Naive thymus-derived CD4-positive, alpha-beta T cell (primary cell): ENCODE measurements at regions of chr10 and their contacts with region 1.

Region 1: DNA sequence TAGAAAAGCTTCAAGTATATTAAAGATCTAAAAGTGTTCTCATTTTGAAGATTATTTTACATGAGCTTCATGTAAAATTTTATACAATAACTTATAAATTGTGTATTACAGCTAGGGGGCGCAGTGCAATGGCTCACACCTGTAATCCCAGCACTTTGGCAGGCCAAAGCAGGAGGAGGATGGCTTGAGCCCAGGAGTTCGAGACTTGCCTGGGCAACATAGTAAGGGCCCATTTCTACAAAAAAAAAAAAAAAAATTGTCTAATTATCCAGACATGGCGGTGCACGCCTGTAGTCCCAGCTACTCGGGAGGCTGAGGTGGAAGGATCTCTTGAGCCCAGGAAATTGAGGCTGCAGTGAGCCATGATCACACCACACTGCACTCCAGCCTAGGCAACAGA is 16.6 kb downstream of the ACBD5 start:
- DNase-seq: peak in 7 of 9 donors; percentile 20 to 60 (median 44)
- ATAC-seq: peak; percentile 71
- H3K4me3 ChIP-seq: no peak overlapping the region
- H3K4me3 Mint-ChIP-seq: no peak overlapping the region
- H3K27ac ChIP-seq: no peak overlapping the region
- H3K27ac Mint-ChIP-seq: peak overlapping the region in 1 of 9 donors; percentile 1
- H3K4me1 ChIP-seq: peaks cover 0 to 36% of the 10 kb centered on the region in 2 donors
- H3K4me1 Mint-ChIP-seq: peaks cover 8 to 20% (median 11%) of the 10 kb centered on the region in 7 donors
- H3K27me3 ChIP-seq: no peaks in the 10 kb centered on the region
- H3K27me3 Mint-ChIP-seq: no peaks in the 10 kb centered on the region

Region 2: DNA sequence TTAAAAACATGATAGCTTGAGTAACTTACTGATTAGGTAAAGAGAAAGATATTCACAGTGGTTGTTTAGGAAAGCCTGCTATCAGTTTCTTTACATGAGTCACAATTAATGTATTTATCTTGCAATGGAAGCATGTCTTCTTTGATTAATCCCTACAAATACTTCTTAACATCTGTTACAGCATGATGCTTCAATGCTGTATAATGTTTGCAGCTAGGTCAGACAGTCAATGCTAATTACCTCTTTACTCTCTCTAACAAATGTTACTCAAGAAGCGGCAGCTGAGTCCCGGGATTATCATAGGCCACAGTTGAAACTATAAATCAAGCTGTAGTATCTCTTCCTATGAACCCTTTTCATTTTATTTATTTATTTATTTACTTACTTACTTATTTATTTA is 16.6 kb before region 1 on chr10:
- CTCF ChIA-PET with region 1: interaction called, 3 read pairs
- POLR2A ChIA-PET with region 1: no interaction called
- intact Hi-C with region 1: loop called in 1 of 2 experiments (anchors 2 kb)
- DNase-seq: no peak
- ATAC-seq: no peak
- H3K4me3 ChIP-seq: no peak overlapping the region
- H3K4me3 Mint-ChIP-seq: no peak overlapping the region
- H3K27ac ChIP-seq: no peak overlapping the region
- H3K27ac Mint-ChIP-seq: no peak overlapping the region
- H3K4me1 ChIP-seq: no peaks in the 10 kb centered on the region
- H3K4me1 Mint-ChIP-seq: peaks cover 0 to 3% (median 0%) of the 10 kb centered on the region in 7 donors
- H3K27me3 ChIP-seq: no peaks in the 10 kb centered on the region
- H3K27me3 Mint-ChIP-seq: no peaks in the 10 kb centered on the region

Region 3: DNA sequence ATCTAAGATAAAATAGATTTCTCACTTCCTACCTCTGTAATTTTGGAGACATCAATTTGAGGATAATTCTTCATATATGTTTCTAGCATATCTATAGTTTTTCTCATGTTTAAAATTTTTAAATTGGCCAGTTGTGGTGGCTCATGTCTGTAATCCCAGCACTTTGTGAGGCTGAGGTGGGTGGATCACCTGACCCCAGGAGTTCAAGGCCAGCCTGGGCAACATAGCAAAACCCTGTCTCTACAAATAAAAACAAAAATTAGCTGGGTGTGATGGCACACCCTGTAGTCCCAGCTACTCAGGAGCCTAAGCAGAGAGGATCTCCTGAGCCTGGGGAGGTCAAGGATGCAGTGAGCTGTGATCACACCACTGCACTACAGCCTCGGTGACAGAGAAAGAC is 11.7 kb after region 1 on chr10:
- CTCF ChIA-PET with region 1: interaction called, 13 read pairs
- POLR2A ChIA-PET with region 1: interaction called, 5 read pairs
- intact Hi-C with region 1: loop called (anchors 1 kb)
- DNase-seq: no peak
- ATAC-seq: no peak
- H3K4me3 ChIP-seq: no peak overlapping the region
- H3K4me3 Mint-ChIP-seq: no peak overlapping the region
- H3K27ac ChIP-seq: no peak overlapping the region
- H3K27ac Mint-ChIP-seq: no peak overlapping the region
- H3K4me1 ChIP-seq: peaks cover 0 to 11% of the 10 kb centered on the region in 2 donors
- H3K4me1 Mint-ChIP-seq: peaks cover 0 to 23% (median 16%) of the 10 kb centered on the region in 7 donors
- H3K27me3 ChIP-seq: no peaks in the 10 kb centered on the region
- H3K27me3 Mint-ChIP-seq: no peaks in the 10 kb centered on the region

Region 4: DNA sequence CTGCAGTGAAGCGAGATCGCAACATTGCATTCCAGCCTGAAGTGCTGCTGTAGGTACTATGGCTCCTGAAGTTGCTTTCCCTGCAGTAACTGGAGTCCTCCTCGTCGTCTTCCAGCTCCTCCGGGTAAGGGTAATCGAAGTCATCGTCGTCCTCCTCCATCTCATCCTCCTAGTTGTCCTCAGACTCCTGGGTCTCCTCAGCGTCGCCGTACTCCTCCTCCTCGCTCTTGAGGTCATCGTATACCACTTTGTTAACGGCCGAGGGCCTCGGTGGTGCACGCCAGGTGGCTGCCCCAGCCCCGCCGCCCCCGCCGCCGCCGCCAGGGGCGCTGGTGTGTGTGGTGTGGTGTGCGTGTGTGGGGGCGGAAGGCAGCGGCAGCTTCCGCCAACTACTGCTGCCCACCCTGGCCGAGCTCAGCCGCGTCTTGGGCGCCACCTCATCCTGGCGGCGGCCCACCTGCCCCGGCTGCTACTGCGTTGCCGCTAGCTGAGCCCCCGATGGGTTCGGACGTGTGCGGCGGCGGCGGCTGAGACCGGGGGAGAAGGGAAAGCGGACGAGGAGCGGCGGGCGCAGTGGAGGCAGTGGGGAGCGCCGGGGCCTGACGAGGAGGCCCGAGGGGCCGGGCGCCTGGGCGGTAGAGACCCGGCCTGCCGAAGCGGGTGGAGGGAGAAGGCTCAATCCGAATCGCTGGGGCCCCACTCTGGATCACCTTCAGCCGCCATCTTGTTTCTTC is 28.5 kb after region 1 on chr10:
- CTCF ChIA-PET with region 1: interaction called, 8 read pairs
- POLR2A ChIA-PET with region 1: interaction called, 3 read pairs
- intact Hi-C with region 1: loop called in 1 of 2 experiments (anchors 2 kb)
- DNase-seq: peak; percentile 66 to 87 (median 80)
- ATAC-seq: peak; percentile 97
- H3K4me3 ChIP-seq: peak overlapping the region; percentile 51
- H3K4me3 Mint-ChIP-seq: peak overlapping the region; percentile 69 to 88 (median 80)
- H3K27ac ChIP-seq: peak overlapping the region; percentile 79
- H3K27ac Mint-ChIP-seq: peak overlapping the region; percentile 40 to 88 (median 81)
- H3K4me1 ChIP-seq: peaks cover 0 to under 1% of the 10 kb centered on the region in 2 donors
- H3K4me1 Mint-ChIP-seq: peaks cover 8 to 15% (median 13%) of the 10 kb centered on the region in 7 donors
- H3K27me3 ChIP-seq: no peaks in the 10 kb centered on the region
- H3K27me3 Mint-ChIP-seq: peaks cover 0 to 5% (median 5%) of the 10 kb centered on the region in 5 donors

Region 5: GRCh38 chr10:27285108-27285507 is 61.1 kb after region 1 on chr10:
- CTCF ChIA-PET with region 1: interaction called, 16 read pairs
- POLR2A ChIA-PET with region 1: interaction called, 3 read pairs
- intact Hi-C with region 1: loop called (anchors 1 kb)
- DNase-seq: peak in 7 of 9 donors; percentile 17 to 54 (median 28)
- ATAC-seq: peak; percentile 73
- H3K4me3 ChIP-seq: no peak overlapping the region
- H3K4me3 Mint-ChIP-seq: no peak overlapping the region
- H3K27ac ChIP-seq: no peak overlapping the region
- H3K27ac Mint-ChIP-seq: no peak overlapping the region
- H3K4me1 ChIP-seq: no peaks in the 10 kb centered on the region
- H3K4me1 Mint-ChIP-seq: peaks cover 0 to 6% (median 0%) of the 10 kb centered on the region in 7 donors
- H3K27me3 ChIP-seq: no peaks in the 10 kb centered on the region
- H3K27me3 Mint-ChIP-seq: peaks cover 0 to 10% (median 0%) of the 10 kb centered on the region in 5 donors

Region 6: GRCh38 chr10:27360581-27361172 is 136.7 kb after region 1 on chr10:
- CTCF ChIA-PET with region 1: interaction called, 27 read pairs
- POLR2A ChIA-PET with region 1: no interaction called
- intact Hi-C with region 1: loop called (anchors 1 kb)
- DNase-seq: peak; percentile 67 to 85 (median 81)
- ATAC-seq: peak; percentile 97
- H3K4me3 ChIP-seq: no peak overlapping the region
- H3K4me3 Mint-ChIP-seq: no peak overlapping the region
- H3K27ac ChIP-seq: no peak overlapping the region
- H3K27ac Mint-ChIP-seq: no peak overlapping the region
- H3K4me1 ChIP-seq: no peaks in the 10 kb centered on the region
- H3K4me1 Mint-ChIP-seq: no peaks in the 10 kb centered on the region
- H3K27me3 ChIP-seq: no peaks in the 10 kb centered on the region
- H3K27me3 Mint-ChIP-seq: no peaks in the 10 kb centered on the region